Ascending aorta (tissue), 2 donors: ENCODE measurements at regions of chr22 and their contacts with region 1.

Region 1: DNA sequence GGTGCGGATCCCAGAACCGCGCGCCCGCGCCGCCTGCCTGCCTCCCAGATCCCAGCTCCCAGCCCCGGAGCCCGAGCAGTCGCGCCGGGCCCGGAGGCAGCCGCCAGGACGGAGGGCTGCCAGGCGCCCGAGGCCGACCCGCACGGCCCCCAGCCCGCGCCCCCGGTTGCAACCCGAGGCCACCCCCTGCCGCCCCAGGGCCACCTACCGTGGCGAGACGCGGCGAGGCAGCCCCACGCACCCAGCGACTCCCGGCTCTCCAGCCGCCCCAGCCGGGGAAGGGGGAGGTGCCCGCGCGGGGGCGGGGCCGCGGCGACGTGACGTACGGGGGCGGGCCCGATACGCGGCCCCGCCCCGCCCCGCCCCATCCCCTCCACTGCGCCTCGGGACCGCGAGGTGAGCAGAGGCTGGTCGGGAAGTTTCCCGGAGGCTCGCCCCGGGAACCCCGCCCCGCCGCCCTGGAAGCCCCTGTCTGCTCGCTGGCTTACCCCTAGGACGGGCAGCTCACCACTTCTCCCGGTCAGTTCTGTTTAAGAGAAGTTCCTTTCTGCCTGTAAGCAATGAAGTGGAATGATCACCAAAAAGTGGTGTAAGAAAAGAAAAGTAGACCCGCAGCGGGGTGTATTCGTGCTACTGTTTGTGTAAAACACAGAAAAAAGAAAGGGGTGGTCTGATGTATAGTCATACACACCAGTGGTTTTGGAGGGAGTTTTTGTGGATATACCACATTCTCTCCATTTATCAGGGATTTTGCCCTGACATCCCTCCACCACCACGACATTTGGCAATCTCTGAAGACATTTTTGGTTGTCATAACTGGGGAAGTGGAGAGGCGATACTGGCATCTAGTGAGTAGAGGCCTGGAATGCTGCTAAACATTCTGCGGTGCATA is at the start of gene TPST2:
- DNase-seq: peak; percentile 15 to 89
- H3K4me3 ChIP-seq: peak within 1 kb of the TSS; percentile 83 to 87
- H3K27ac ChIP-seq: peak within 1 kb of the TSS; percentile 74 to 75
- H3K4me1 ChIP-seq: peaks cover 0 to 20% of the 10 kb centered on the region in 2 donors
- H3K27me3 ChIP-seq: no peaks in the 10 kb centered on the region
- CTCF ChIP-seq: no peak
- total RNA-seq, gene TPST2: 251 TPM

Region 2: DNA sequence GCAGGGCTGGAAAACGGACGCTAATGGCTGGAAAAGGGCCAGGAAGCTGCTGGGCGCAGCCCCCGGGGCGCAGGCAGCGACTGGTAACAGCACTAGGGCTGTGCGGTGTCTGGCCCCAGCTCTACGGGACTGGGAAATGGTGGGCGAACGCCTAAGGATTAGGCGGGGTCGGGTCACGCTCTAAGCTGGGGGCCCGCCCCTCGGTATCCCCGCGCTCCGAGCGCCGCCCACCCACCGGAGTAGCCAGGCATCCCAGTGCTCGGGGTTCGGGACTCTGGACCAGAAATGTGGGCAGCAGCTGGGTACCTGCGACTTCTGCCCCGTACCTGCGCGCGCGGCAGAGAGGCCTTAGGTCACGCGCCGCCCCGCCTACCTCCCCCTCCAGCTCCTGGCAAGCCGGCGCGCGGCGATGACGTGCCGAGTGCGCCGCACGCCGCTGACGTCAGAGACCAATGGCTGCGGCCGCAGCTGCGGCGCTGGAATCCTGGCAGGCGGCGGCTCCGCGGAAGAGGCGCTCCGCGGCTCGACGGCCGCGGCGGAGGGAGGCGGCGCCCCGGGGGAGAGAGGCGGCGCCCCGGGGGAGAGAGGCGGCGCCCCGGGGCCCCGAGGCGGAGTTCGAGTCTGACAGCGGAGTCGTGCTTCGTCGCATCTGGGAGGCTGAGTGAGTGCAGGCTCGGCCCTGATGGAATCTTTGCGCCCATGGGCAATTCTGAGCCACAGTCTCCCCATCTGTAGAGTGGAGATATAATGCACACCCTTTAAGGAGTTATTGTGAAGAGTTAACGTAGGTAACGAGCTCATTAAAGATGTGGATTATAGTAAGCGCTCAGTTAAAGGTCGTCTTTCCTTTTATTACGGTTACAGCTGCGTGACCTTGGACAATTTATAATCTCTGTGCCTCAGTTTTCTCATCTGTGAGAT is 106.4 kb before region 1 on chr22 and contains the starts of genes HPS4 and SRRD:
- intact Hi-C with region 1: loop called (anchors 1 kb)
- DNase-seq: peak; percentile 45 to 94
- H3K4me3 ChIP-seq: peak within 1 kb of the TSS; percentile 90 to 99
- H3K27ac ChIP-seq: peak within 1 kb of the TSS; percentile 95 to 96
- H3K4me1 ChIP-seq: peaks cover 6 to 16% of the 10 kb centered on the region in 2 donors
- H3K27me3 ChIP-seq: no peaks in the 10 kb centered on the region
- CTCF ChIP-seq: no peak
- total RNA-seq, gene HPS4: 39.3 TPM
- total RNA-seq, gene SRRD: 85.6 TPM

Region 3: DNA sequence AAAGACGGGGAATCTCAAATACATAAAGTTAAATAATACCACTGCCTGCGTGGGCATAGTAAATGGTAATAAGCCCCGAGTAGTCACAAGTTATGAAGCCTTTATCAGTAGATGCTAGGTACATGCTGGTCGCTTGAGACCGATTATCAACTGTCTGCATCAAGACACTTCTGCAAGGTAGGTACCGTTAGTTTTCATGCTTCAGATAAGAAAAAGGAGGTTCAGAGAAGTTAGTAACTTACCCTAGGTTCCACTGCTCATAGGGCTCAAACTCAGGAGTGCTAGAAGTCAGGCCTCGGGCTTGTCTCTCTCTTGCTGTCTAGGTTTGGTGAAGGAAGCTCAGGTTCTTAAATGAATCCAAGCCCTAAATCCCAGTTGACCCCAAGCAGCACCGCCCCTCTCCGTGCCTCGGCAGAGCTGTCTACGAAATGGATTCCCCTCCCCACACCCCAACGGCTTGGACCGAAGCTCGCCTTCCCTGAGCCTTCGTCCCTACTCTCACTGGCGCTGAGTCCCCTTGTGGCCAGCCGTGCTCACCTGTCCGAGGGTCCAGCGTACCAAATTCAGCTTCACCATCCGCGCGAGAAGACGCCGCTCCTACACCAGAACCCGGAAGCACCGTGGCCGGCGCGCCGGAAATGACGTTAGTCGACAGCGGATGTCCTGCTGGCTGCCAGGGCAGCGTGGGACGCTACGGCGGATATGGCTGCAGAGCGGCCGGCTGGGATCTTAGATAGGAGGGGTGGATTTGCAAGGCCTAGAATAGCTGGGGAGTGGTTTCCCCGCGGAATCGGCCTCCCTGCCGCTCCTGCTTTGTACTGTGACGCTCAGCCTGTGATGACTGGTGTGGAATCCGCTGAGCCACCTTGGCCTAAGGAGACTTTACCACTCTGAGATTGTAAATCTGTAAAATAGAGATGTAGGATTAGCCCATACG is 78.0 kb before region 1 on chr22 and contains the start of gene TFIP11:
- intact Hi-C with region 1: loop called (anchors 2 kb)
- DNase-seq: peak; percentile 75 to 97
- H3K4me3 ChIP-seq: peak within 1 kb of the TSS; percentile 73 to 88
- H3K27ac ChIP-seq: peak within 1 kb of the TSS; percentile 55 to 86
- H3K4me1 ChIP-seq: peaks cover 5 to 11% of the 10 kb centered on the region in 2 donors
- H3K27me3 ChIP-seq: no peaks in the 10 kb centered on the region
- CTCF ChIP-seq: peak in 2 of 3 experiments; percentile 4
- total RNA-seq, gene TFIP11: 11.6 TPM